ENCODE measurements at regions of chr19 and their contacts with region 1.

Region 1: DNA sequence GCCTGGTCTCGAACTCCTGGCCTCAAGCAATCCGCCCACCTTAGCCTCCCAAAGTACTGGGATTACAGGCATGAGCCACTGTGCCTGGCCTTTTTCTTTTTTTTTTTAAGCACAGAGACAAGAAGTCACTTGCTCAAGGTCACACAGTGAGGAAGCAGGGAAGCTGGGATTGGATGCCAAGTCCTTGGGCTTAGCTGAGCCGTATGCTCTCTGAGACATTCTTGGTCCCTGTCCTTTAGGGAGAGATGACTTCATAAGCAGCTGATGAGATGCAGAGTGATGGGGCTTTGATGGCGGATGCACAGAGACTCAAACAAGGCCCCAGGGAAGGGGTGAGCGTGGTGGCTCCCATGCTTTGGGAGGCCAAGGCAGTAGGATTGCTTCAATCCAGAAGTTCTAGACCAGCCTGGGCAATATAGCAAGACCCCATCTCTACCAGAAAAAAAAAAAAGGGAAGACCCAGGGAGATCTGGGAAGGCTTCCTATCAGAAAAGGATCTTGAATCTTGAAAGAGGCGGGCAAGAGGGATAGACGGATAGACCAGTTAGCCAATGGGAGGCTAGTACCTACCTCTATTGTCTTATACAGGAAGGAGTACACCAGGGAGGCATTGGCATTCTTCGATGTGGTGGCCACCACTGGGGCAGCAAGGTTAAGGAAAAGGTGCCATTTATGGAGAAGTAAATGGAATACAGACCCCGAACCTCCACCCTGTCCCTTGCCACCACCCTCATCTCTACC is 3.9 kb downstream of the AP1M2 start:
- DNase-seq: no peak
- ATAC-seq: no peak
- H3K4me3 ChIP-seq: no peak overlapping the region
- H3K27ac ChIP-seq: no peak overlapping the region
- H3K4me1 ChIP-seq: peaks cover 14% of the 10 kb centered on the region
- H3K27me3 ChIP-seq: no peaks in the 10 kb centered on the region
- CTCF ChIP-seq: no peak
- POLR2A ChIP-seq: no peak

Region 2: GRCh38 chr19:10643968-10644259 is 60.7 kb after region 1 on chr19:
- intact Hi-C with region 1: loop called (anchors 2 kb)
- DNase-seq: no peak
- ATAC-seq: peak; percentile 3
- H3K4me3 ChIP-seq: no peak overlapping the region
- H3K27ac ChIP-seq: peak overlapping the region; percentile 67 to 79 (median 74)
- H3K4me1 ChIP-seq: peaks cover 42% of the 10 kb centered on the region
- H3K27me3 ChIP-seq: no peaks in the 10 kb centered on the region
- CTCF ChIP-seq: no peak
- POLR2A ChIP-seq: no peak

Region 3: GRCh38 chr19:10748924-10749434 is 165.8 kb after region 1 on chr19:
- intact Hi-C with region 1: no loop called
- DNase-seq: peak; percentile 85 to 96 (median 92)
- ATAC-seq: peak; percentile 78
- H3K4me3 ChIP-seq: no peak overlapping the region
- H3K27ac ChIP-seq: peak overlapping the region; percentile 88 to 94 (median 90)
- H3K4me1 ChIP-seq: peaks cover 80% of the 10 kb centered on the region
- H3K27me3 ChIP-seq: no peaks in the 10 kb centered on the region
- CTCF ChIP-seq: peak in 2 of 7 experiments; percentile 13 to 15
- POLR2A ChIP-seq: no peak